CD4-positive, alpha-beta T cell (primary cell): ENCODE measurements at regions of chr3 and their contacts with region 1.

Region 1: GRCh38 chr3:18489939-18490338 is 64.8 kb upstream of the SATB1 start:
- DNase-seq: peak in 8 of 14 experiments; percentile 1 to 66 (median 28)
- ATAC-seq: no peak
- H3K4me3 ChIP-seq: no peak overlapping the region
- H3K4me3 Mint-ChIP-seq: peak overlapping the region; percentile 61
- H3K27ac ChIP-seq: no peak overlapping the region
- H3K27ac Mint-ChIP-seq: peak overlapping the region; percentile 55
- H3K4me1 ChIP-seq: peaks cover 5% of the 10 kb centered on the region
- H3K4me1 Mint-ChIP-seq: peaks cover 44% of the 10 kb centered on the region
- H3K27me3 ChIP-seq: no peaks in the 10 kb centered on the region
- H3K27me3 Mint-ChIP-seq: no peaks in the 10 kb centered on the region
- CTCF ChIP-seq: no peak

Region 2: GRCh38 chr3:18454766-18455165 is 35.2 kb before region 1 on chr3:
- CTCF ChIA-PET with region 1: no interaction called
- POLR2A ChIA-PET with region 1: no interaction called
- intact Hi-C with region 1: loop called (anchors 5 kb)
- DNase-seq: no peak
- ATAC-seq: no peak
- H3K4me3 ChIP-seq: no peak overlapping the region
- H3K4me3 Mint-ChIP-seq: no peak overlapping the region
- H3K27ac ChIP-seq: no peak overlapping the region
- H3K27ac Mint-ChIP-seq: no peak overlapping the region
- H3K4me1 ChIP-seq: peaks cover 3% of the 10 kb centered on the region
- H3K4me1 Mint-ChIP-seq: peaks cover 79% of the 10 kb centered on the region
- H3K27me3 ChIP-seq: no peaks in the 10 kb centered on the region
- H3K27me3 Mint-ChIP-seq: no peaks in the 10 kb centered on the region
- CTCF ChIP-seq: no peak

Region 3: DNA sequence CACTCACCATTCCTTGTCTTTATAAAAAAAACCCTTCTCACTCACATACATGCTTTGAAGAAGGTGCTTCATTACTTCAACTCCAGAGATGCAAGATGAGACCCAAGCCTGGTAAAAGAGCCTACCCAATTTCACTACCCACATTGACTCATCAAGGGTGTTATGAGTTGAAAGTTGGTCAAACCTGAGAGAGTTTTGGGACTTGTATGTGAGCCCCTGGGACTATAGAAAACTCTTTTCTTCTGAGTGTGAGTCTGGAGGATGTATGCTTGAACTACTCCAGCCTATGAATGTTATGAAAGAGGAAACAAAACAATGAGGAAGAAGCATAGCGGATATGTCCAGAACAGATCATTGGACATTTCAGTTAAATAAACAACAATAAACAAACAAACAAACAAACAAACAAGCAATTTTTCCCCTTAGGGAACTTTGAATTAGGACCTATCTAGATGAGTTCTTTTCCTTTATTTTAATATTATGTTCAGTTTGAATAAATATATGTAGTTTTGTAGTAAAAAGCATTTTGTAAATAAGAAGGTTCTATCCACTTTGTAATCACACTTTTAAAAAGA is 41.8 kb after region 1 on chr3:
- CTCF ChIA-PET with region 1: no interaction called
- POLR2A ChIA-PET with region 1: no interaction called
- intact Hi-C with region 1: loop called in 1 of 2 experiments (anchors 5 kb)
- DNase-seq: no peak
- ATAC-seq: no peak
- H3K4me3 ChIP-seq: no peak overlapping the region
- H3K4me3 Mint-ChIP-seq: no peak overlapping the region
- H3K27ac ChIP-seq: no peak overlapping the region
- H3K27ac Mint-ChIP-seq: no peak overlapping the region
- H3K4me1 ChIP-seq: no peaks in the 10 kb centered on the region
- H3K4me1 Mint-ChIP-seq: no peaks in the 10 kb centered on the region
- H3K27me3 ChIP-seq: no peaks in the 10 kb centered on the region
- H3K27me3 Mint-ChIP-seq: no peaks in the 10 kb centered on the region
- CTCF ChIP-seq: no peak